ENCODE measurements at regions of chr20 and their contacts with region 1.

Region 1: GRCh38 chr20:9359561-9360308 is 154.7 kb upstream of the LAMP5 start:
- DNase-seq: peak; percentile 67
- H3K4me3 ChIP-seq: no peak overlapping the region
- H3K27ac ChIP-seq: no peak overlapping the region
- H3K4me1 ChIP-seq: no peaks in the 10 kb centered on the region
- H3K27me3 ChIP-seq: no peaks in the 10 kb centered on the region
- CTCF ChIP-seq: peak; percentile 40

Region 2: GRCh38 chr20:8756410-8756809 is 603.3 kb before region 1 on chr20:
- intact Hi-C with region 1: loop called (anchors 5 kb)
- DNase-seq: no peak
- H3K4me3 ChIP-seq: no peak overlapping the region
- H3K27ac ChIP-seq: no peak overlapping the region
- H3K4me1 ChIP-seq: no peaks in the 10 kb centered on the region
- H3K27me3 ChIP-seq: no peaks in the 10 kb centered on the region
- CTCF ChIP-seq: no peak

Region 3: DNA sequence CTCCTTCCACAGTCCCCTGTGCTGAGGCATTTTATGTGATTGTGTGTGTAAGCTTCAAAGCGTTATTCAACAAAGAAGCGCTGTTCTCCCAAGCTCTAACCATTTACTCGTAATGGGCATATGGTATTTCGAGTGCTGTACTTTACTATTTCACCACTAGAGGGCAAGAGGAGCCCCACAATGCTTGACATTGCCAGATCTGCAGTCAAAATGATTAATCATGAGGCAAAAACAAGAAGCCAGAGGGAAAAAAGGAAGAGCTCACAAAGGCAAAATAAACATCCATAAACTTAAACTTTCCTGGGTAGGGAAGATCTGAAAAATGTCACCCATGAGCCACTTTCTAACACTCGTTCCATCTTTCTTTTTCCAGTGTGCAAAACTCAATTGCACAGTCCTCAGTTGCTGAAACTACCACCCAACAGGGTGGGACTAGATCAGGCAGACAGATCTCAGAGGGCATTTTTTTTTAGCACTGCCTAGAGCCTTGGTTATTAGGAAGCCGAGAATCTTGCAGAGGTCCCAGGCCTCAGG is 505.9 kb before region 1 on chr20:
- intact Hi-C with region 1: loop called (anchors 5 kb)
- DNase-seq: peak; percentile 37
- H3K4me3 ChIP-seq: no peak overlapping the region
- H3K27ac ChIP-seq: no peak overlapping the region
- H3K4me1 ChIP-seq: no peaks in the 10 kb centered on the region
- H3K27me3 ChIP-seq: no peaks in the 10 kb centered on the region
- CTCF ChIP-seq: peak; percentile 79

Region 4: DNA sequence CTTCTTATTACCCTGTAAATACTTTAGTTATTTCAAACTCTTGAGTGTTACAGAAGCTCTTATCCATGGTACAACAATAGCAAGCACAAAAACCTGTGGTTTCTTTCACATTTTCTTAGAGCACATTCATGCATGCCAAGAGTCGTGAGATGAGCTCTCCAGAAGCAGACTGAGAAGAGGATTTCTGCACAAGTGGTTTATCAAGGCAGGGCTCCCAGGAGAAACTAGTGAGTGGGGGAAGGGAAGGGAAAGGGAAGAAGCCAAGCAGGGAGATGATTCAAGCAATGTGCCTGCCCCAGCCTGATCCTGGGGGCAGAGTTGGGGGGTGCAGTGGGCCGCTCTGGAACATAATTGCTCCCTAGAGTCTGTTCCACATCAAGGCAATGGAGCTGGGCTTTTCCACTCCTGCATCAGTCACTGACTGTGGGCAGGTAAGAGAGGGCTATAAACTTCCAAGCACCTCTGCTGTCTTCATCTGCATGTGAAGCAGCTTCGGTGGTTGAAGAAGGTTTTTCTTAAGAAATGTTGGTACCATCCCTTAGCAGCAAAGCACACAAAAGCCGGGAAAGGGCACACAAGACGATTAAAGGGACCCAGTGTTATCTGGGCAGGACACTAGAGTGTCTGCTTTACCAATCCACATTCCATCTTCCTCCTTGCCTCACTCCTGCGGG is 138.7 kb before region 1 on chr20:
- intact Hi-C with region 1: loop called (anchors 2 kb)
- DNase-seq: no peak
- H3K4me3 ChIP-seq: no peak overlapping the region
- H3K27ac ChIP-seq: no peak overlapping the region
- H3K4me1 ChIP-seq: no peaks in the 10 kb centered on the region
- H3K27me3 ChIP-seq: no peaks in the 10 kb centered on the region
- CTCF ChIP-seq: no peak